ENCODE measurements at regions of chr11 and their contacts with region 1.

Region 1: GRCh38 chr11:65888163-65888814 is at the start of gene FIBP:
- DNase-seq: peak; percentile 98 to 99
- ATAC-seq: peak; percentile 82 to 86 (median 84)
- H3K4me3 ChIP-seq: peak within 1 kb of the TSS; percentile 75
- H3K27ac ChIP-seq: peak within 1 kb of the TSS; percentile 97
- H3K4me1 ChIP-seq: peaks cover 26% of the 10 kb centered on the region
- H3K27me3 ChIP-seq: no peaks in the 10 kb centered on the region
- CTCF ChIP-seq: peak; percentile 73
- total RNA-seq, gene FIBP: 27.7 to 42.5 (median 37.0) TPM

Region 2: GRCh38 chr11:65857853-65858638 is 30.2 kb before region 1 on chr11 and contains the start of gene CFL1:
- intact Hi-C with region 1: loop called in 1 of 2 experiments (anchors 2 kb)
- DNase-seq: peak; percentile 99
- ATAC-seq: peak; percentile 76 to 79 (median 76)
- H3K4me3 ChIP-seq: peak within 1 kb of the TSS; percentile 100
- H3K27ac ChIP-seq: peak within 1 kb of the TSS; percentile 99
- H3K4me1 ChIP-seq: peaks cover 21% of the 10 kb centered on the region
- H3K27me3 ChIP-seq: no peaks in the 10 kb centered on the region
- CTCF ChIP-seq: no peak
- total RNA-seq, gene CFL1: 175 to 388 (median 238) TPM

Region 3: GRCh38 chr11:65961232-65961901 is 73.1 kb after region 1 on chr11 and contains the start of gene SART1:
- intact Hi-C with region 1: loop called (anchors 5 kb)
- DNase-seq: peak; percentile 98 to 99
- ATAC-seq: peak; percentile 97 to 99 (median 98)
- H3K4me3 ChIP-seq: peak within 1 kb of the TSS; percentile 100
- H3K27ac ChIP-seq: peak within 1 kb of the TSS; percentile 91
- H3K4me1 ChIP-seq: peaks cover 15% of the 10 kb centered on the region
- H3K27me3 ChIP-seq: no peaks in the 10 kb centered on the region
- CTCF ChIP-seq: no peak
- total RNA-seq, gene SART1: 36.3 to 55.4 (median 49.3) TPM

Region 4: GRCh38 chr11:65988791-65989592 is 100.7 kb after region 1 on chr11:
- intact Hi-C with region 1: loop called (anchors 1 to 2 kb)
- DNase-seq: peak; percentile 83 to 85
- ATAC-seq: peak; percentile 95 to 99 (median 98)
- H3K4me3 ChIP-seq: no peak overlapping the region
- H3K27ac ChIP-seq: no peak overlapping the region
- H3K4me1 ChIP-seq: peaks cover 3% of the 10 kb centered on the region
- H3K27me3 ChIP-seq: no peaks in the 10 kb centered on the region
- CTCF ChIP-seq: peak; percentile 95

Measured in psoas muscle (tissue), 8 donors.